AG04450 (cell line): ENCODE measurements at regions of chr1 and their contacts with region 1.

Region 1: GRCh38 chr1:109598655-109599054 is 20.8 kb downstream of the GNAT2 start:
- DNase-seq: no peak
- H3K4me3 ChIP-seq: no peak overlapping the region
- H3K27ac ChIP-seq: no peak overlapping the region
- H3K27me3 ChIP-seq: no peaks in the 10 kb centered on the region
- CTCF ChIP-seq: peak; percentile 25

Region 2: GRCh38 chr1:109181105-109181806 is 417.4 kb before region 1 on chr1:
- CTCF ChIA-PET with region 1: interaction called, 10 read pairs
- POLR2A ChIA-PET with region 1: no interaction called
- DNase-seq: no peak
- H3K4me3 ChIP-seq: no peak overlapping the region
- H3K27ac ChIP-seq: peak overlapping the region; percentile 31
- H3K27me3 ChIP-seq: no peaks in the 10 kb centered on the region
- CTCF ChIP-seq: no peak

Region 3: DNA sequence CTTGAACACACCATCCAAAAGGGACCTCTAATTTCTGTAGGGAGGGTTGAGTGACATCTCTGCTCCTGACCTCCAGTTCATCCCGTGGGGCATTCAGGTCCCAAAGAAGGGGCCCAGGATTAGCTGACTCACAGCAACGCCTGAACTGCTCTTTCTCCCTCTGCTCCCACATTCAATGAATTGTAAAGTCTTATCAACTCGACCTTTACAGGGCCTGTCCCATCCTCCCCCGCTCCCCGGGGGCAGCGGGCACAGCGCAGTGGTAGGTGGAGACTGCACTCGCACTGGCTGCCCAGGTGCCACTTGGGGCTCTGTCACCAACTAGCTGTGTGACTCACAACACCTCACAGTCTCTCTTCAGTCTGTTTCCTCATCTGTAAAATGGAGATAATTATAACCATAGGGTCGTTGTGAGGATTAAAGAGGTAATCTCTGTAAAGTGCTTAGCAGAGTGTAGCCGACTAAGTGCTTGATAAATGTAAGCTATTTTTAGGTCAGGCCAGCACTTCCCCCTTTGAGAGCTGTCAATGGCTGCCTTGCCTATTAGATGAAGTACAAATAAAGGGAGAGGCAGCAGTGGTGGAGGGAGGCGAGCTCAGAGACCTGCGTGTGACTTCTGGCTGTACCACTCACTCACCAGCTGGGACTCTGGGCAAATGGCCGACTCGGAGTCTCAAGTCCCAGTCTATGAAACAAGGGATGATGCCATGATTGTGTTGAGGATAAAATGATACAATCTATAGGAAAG is 291.2 kb before region 1 on chr1:
- CTCF ChIA-PET with region 1: no interaction called
- POLR2A ChIA-PET with region 1: no interaction called
- DNase-seq: no peak
- H3K4me3 ChIP-seq: no peak overlapping the region
- H3K27ac ChIP-seq: no peak overlapping the region
- H3K27me3 ChIP-seq: no peaks in the 10 kb centered on the region
- CTCF ChIP-seq: no peak

Region 4: GRCh38 chr1:109539676-109540075 is 59.0 kb before region 1 on chr1 and contains the start of gene GPR61:
- CTCF ChIA-PET with region 1: no interaction called
- POLR2A ChIA-PET with region 1: no interaction called
- DNase-seq: no peak
- H3K4me3 ChIP-seq: no peak within 1 kb of the TSS
- H3K27ac ChIP-seq: no peak within 1 kb of the TSS
- H3K27me3 ChIP-seq: peaks cover 15% of the 10 kb centered on the region
- CTCF ChIP-seq: no peak
- polyA plus RNA-seq, gene GPR61: not detected in 2 replicates